ENCODE measurements at regions of chrX and their contacts with region 1.

Region 1: DNA sequence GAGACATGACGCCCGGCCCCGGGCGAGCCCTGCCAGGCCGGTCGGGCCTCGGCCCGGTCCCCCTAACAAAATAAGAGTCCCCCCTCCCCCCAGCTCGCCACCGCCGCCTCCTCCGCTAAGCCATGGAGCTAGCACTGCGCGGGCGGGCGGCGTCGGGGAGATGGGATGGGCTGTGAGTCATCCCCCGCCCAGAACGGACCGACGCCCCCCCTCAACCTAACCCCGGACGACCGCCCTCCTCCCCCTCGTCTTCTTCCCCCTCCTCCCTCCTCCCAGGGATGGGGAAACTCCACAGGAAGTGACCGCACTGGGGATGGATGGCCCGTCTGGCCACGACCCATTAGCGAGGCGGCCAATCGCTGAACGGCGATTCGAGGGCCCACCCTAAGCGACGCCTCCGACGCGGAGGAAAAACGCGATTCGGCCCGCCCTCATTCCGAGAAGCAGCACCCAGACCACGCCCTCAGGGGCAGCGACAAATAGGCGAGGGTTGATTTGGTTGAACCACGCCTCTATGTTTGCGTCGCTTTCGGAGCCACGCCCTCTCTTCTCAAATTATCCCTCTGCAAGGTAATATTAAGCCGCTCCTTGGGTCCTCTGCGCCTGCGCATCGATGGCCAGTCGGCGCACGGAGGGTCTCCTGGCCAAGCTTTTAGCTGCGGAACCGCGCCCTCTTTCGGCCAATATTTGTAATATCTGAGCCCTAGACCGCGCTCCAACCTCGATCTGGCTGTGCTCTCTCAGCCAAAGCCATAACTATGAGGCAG is at the start of gene TFE3:
- DNase-seq: peak; percentile 91 to 99
- ATAC-seq: peak; percentile 78 to 88
- H3K4me3 ChIP-seq: peak within 1 kb of the TSS; percentile 93
- H3K27ac ChIP-seq: peak within 1 kb of the TSS; percentile 99 to 100
- H3K4me1 ChIP-seq: peaks cover 17% of the 10 kb centered on the region
- CTCF ChIP-seq: peak; percentile 70
- EP300 ChIP-seq: no peak
- POLR2A ChIP-seq: 0 out of 2 replicates have a peak, but pooled peaks have one; percentile 31
- RAD21 ChIP-seq: peak; percentile 83 to 85
- polyA plus RNA-seq, gene TFE3: 16.1 and 27.3 TPM in 2 replicates

Region 2: DNA sequence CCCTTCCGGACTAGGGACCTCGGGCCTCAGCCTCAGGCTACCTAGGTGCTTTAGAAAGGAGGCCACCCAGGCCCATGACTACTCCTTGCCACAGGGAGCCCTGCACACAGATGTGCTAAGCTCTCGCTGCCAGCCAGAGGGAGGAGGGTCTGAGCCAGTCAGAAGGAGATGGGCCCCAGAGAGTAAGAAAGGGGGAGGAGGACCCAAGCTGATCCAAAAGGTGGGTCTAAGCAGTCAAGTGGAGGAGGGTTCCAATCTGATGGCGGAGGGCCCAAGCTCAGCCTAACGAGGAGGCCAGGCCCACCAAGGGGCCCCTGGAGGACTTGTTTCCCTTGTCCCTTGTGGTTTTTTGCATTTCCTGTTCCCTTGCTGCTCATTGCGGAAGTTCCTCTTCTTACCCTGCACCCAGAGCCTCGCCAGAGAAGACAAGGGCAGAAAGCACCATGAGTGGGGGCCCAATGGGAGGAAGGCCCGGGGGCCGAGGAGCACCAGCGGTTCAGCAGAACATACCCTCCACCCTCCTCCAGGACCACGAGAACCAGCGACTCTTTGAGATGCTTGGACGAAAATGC is 359.9 kb before region 1 on chrX and contains the start of gene WAS:
- CTCF ChIA-PET with region 1: no interaction called
- POLR2A ChIA-PET with region 1: no interaction called
- DNase-seq: no peak
- ATAC-seq: no peak
- H3K4me3 ChIP-seq: no peak within 1 kb of the TSS
- H3K27ac ChIP-seq: no peak within 1 kb of the TSS
- H3K4me1 ChIP-seq: no peaks in the 10 kb centered on the region
- CTCF ChIP-seq: no peak
- EP300 ChIP-seq: no peak
- POLR2A ChIP-seq: no peak
- RAD21 ChIP-seq: no peak
- polyA plus RNA-seq, gene WAS: 0.05 and 0.09 TPM in 2 replicates

Region 3: DNA sequence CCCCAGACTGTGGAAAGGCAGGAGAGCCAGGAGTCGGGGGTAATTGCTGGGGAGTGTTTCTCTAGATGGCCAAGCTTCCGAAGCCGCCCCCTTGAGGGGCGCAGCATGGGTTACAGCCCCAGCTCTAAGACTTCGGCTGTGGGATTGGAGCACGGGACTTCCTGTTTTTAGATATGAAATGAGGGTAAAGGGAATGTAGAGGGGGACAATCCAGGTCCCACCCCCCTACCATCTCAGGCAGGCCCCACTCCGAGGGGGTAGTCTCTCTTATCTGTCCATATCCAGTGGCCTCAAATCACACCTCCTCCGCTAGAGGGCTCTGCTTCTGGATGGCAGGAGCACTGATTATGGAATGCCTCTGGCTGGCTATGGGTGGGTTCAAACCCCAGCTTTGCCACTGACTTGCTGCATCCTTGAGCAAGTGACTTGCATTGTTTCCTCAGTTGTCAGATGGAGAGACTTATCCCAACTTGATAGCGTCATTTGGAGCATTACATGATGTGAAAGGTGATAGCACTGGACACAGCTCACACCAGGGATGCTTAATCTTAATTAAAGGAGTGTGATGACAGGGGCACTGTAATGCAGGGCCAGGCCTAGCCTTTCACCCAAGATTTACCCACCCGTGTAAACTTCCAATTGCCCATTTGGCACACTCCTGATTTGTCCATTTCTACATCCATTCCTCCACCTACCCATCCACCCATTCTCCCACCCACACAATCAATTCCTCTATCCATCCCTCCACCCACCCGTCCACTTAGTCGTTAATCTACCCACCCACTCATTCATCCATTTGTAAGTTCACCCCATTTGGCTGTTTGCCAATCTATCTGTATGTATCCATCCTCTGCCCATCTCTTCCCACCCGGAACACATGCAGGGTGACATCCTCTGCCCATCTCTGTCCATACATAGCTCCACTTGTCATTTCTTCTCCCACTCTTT is 70.9 kb before region 1 on chrX:
- CTCF ChIA-PET with region 1: interaction called, 32 read pairs
- POLR2A ChIA-PET with region 1: interaction called, 4 read pairs
- DNase-seq: peak; percentile 54 to 60
- ATAC-seq: peak; percentile 72 to 88
- H3K4me3 ChIP-seq: peak overlapping the region; percentile 0; the same call in 1 of the 3 replicates
- H3K27ac ChIP-seq: peak overlapping the region in 1 of 2 experiments; percentile 70; a peak in 3 of 6 replicates
- H3K4me1 ChIP-seq: peaks cover 11% of the 10 kb centered on the region
- CTCF ChIP-seq: peak; percentile 60
- EP300 ChIP-seq: no peak
- POLR2A ChIP-seq: no peak
- RAD21 ChIP-seq: peak; percentile 35 to 40; a peak in 4 of 5 replicates

Region 4: DNA sequence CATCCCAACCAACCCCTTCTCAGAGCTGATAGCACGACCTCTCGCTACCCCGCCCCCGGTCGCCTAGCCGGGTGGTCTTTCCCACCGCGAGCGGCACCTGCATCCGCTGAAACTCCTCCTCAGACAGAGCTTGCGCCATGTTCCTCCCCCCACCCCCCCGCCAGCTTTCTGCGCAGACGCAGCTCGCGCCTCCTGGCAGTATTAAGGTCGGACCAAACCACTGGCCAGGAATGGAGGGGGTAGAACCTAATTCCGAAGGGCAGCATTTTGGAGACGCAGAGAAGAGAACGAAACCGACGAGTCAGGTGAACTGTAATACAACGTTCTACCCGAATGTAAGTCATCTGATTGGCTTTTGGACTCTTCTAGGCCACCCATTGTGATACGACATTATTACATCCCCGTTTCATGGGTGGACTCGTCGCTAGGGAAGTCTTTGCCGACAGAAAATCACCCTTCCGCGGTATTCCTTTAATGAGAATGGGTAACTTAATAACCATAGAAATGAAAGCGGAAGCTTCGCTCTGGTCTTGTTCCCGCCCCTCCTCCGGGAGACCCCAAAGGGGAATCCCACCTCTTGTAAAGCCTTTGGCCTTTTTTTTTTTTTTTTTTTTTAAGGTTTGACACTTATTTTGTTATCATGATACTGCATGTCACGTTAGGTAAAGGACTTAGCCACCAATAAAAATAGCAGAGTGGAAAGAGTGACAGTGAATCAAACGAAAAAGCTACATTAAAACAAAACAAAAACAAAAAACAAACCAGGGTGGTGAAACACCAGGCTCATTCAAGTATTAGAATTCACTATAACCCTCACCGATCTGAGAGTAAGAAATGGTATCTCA is 41.1 kb before region 1 on chrX and contains the start of gene GRIPAP1:
- CTCF ChIA-PET with region 1: interaction called, 4 read pairs
- POLR2A ChIA-PET with region 1: interaction called, 15 read pairs
- DNase-seq: peak; percentile 85 to 93
- ATAC-seq: peak; percentile 88 to 92
- H3K4me3 ChIP-seq: peak within 1 kb of the TSS; percentile 75
- H3K27ac ChIP-seq: peak within 1 kb of the TSS; percentile 94 to 98
- H3K4me1 ChIP-seq: peaks cover 5% of the 10 kb centered on the region; the same call in 1 of the 3 replicates
- CTCF ChIP-seq: no peak
- EP300 ChIP-seq: no peak
- POLR2A ChIP-seq: peak; percentile 69
- RAD21 ChIP-seq: no peak
- polyA plus RNA-seq, gene GRIPAP1: 33.7 and 35.1 TPM in 2 replicates

Region 5: DNA sequence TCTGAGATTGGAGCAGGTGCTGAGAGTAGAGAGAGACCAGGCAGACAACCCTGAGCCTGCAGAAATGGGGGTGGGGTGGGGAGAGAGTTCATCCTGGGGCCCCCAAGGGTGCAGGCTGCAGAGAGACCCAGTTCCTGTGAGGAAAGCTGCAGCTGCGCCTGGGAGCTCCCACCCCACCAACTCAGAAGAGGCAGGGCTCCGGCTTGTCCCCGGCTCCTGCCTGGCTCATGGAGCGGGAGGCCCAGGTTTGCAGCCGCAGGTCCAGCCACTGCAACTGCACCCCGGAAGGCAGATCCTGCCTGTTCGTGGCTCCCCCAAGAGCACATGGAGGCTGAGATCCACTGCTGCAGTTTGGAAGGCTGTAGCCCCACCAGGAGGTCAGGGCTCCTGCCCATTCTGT is 1471.4 kb after region 1 on chrX:
- CTCF ChIA-PET with region 1: no interaction called
- POLR2A ChIA-PET with region 1: no interaction called
- DNase-seq: no peak
- ATAC-seq: no peak
- H3K4me3 ChIP-seq: no peak overlapping the region
- H3K27ac ChIP-seq: no peak overlapping the region
- H3K4me1 ChIP-seq: no peaks in the 10 kb centered on the region
- CTCF ChIP-seq: no peak
- EP300 ChIP-seq: no peak
- POLR2A ChIP-seq: no peak
- RAD21 ChIP-seq: no peak

Measured in A549 (cell line).